ENCODE measurements at regions of chr16 and their contacts with region 1.

Region 1: GRCh38 chr16:20799599-20799998 is 6.7 kb downstream of the ERI2 start:
- DNase-seq: peak; percentile 34
- H3K4me3 Mint-ChIP-seq: no peak overlapping the region
- H3K27ac Mint-ChIP-seq: no peak overlapping the region
- H3K4me1 Mint-ChIP-seq: peaks cover 6% of the 10 kb centered on the region
- H3K27me3 Mint-ChIP-seq: no peaks in the 10 kb centered on the region
- CTCF ChIP-seq: peak; percentile 55

Region 2: DNA sequence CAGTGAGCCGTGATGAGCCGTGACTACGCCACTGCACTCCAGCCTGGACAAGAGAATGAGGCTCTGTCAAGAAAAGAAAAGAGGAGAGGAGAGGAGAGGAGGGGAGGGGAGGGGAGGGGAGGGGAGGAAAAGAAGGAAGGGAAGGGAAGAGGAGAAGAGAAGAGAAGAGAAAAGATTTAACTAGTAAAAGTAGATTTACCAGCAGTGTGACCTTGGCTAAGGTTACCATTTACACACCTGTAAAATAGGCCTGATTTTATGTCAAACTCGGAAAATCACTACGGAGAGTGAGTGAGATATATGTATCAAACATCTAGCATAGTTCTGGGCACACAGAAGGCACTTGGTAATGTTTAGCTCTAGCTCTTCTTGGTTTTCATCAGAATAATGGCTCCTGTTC is 210.2 kb after region 1 on chr16:
- CTCF ChIA-PET with region 1: no interaction called
- POLR2A ChIA-PET with region 1: no interaction called
- intact Hi-C with region 1: no loop called
- DNase-seq: no peak
- H3K4me3 Mint-ChIP-seq: no peak overlapping the region
- H3K27ac Mint-ChIP-seq: no peak overlapping the region
- H3K4me1 Mint-ChIP-seq: peaks cover 5% of the 10 kb centered on the region
- H3K27me3 Mint-ChIP-seq: peaks cover 5% of the 10 kb centered on the region
- CTCF ChIP-seq: no peak

Region 3: DNA sequence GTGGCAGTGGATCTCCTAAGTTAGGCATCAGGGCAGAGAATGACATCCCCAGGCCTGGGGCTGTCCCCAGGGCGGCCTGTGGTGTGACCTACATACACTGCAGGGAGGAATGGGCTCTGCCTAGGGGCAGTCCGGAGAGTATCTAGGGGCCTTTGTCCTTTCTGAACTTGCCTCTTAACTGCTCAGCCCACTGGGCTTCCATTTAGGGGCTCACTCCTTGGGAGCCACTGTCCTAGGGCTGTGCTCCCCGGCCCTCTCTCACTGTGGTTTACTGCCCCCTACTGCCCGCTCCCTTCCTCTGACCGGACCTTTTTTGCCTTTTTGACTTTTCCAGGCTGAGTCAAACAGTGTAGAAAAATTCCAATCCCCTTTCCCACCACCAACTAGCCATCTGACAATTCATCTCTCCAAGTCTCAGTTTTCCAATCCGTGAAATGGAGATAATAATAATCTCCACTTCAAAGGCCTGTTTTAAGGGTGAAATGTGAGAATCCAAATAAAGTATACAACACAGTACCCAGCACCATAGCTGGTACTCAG is 284.2 kb after region 1 on chr16:
- CTCF ChIA-PET with region 1: interaction called, 6 read pairs
- POLR2A ChIA-PET with region 1: no interaction called
- intact Hi-C with region 1: loop called (anchors 2 kb)
- DNase-seq: peak; percentile 70
- H3K4me3 Mint-ChIP-seq: no peak overlapping the region
- H3K27ac Mint-ChIP-seq: no peak overlapping the region
- H3K4me1 Mint-ChIP-seq: peaks cover 6% of the 10 kb centered on the region
- H3K27me3 Mint-ChIP-seq: no peaks in the 10 kb centered on the region
- CTCF ChIP-seq: peak; percentile 76